GM10248 (cell line): ENCODE measurements at regions of chr6 and their contacts with region 1.

Region 1: DNA sequence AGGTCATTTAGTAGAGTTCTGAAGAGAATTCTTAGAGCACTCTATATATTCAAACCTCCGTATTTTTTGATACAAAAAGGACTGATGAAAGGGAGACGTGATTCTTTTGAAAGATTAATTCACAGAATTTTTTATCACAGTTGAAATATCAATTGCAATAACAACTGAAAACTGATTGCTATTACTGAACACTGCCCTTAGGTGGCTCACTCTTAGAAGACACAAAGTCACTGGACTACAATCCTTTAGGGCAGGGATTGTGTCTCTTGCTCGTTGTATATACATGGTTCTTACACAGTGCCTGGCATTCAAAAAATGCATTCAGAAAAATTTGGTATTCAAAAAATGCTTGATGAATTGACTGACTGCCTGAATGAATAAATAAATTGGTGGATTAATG is 17.1 kb upstream of the CALHM6 start:
- DNase-seq: peak; percentile 32
- CTCF ChIP-seq: peak; percentile 71

Region 2: GRCh38 chr6:116200619-116201249 is 243.4 kb before region 1 on chr6:
- CTCF ChIA-PET with region 1: no interaction called
- POLR2A ChIA-PET with region 1: no interaction called
- DNase-seq: no peak
- CTCF ChIP-seq: no peak

Region 3: DNA sequence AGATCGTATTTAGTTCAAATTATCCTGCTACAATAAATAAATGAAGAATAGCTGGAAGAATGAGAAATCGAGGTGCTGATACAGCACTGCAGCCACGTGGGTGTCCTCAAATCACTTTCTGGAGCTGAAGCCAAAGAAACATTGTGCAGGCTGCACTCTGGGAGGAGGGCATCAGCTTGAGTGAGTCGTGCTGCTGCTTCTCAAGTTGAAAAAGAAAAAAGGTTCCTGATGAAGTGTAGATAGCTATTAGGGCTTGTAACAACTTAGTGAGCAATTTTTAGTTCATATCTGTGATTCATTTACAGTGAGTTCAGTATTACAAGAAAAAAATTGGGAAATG is 32.8 kb before region 1 on chr6:
- CTCF ChIA-PET with region 1: interaction called, 17 read pairs
- POLR2A ChIA-PET with region 1: no interaction called
- DNase-seq: no peak
- CTCF ChIP-seq: no peak

Region 4: GRCh38 chr6:116424001-116424400 is 20.1 kb before region 1 on chr6:
- CTCF ChIA-PET with region 1: interaction called, 61 read pairs
- POLR2A ChIA-PET with region 1: no interaction called
- DNase-seq: no peak
- CTCF ChIP-seq: no peak

Region 5: GRCh38 chr6:116461932-116462885 is 18.1 kb after region 1 on chr6:
- CTCF ChIA-PET with region 1: interaction called, 13 read pairs
- POLR2A ChIA-PET with region 1: no interaction called
- DNase-seq: peak; percentile 78
- CTCF ChIP-seq: no peak

Region 6: GRCh38 chr6:116485559-116486184 is 41.6 kb after region 1 on chr6:
- CTCF ChIA-PET with region 1: no interaction called
- POLR2A ChIA-PET with region 1: no interaction called
- DNase-seq: no peak
- CTCF ChIP-seq: no peak